Mammary epithelial cell (primary cell): ENCODE measurements at regions of chr2 and their contacts with region 1.

Region 1: DNA sequence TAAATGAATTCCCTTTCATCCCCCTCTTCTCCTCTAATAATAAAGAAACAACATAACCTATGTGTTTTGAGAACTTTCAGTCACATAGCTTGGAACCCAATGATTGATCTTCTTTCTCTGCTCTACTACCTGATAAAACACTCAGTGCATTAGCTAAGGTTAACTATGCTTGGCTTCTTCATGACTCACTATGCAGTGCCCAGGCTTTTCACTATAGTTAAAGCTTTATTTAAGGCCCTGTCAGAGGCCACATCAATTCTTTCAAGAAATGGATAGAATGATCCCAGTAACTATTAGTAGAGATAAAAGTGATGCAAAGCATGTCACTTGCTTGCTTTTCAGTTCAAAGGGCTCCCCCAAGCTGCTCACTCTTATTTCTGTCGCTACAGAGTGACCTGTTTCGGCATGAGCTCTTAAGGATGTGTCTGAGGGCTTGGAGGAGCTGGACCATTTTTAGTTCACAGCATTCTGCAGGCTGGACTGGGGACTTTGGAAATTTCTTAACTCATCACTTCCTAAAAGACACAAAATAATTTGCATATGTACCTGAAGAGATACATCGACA is 384.0 kb downstream of the LRRTM1 start:
- DNase-seq: no peak
- H3K4me3 ChIP-seq: no peak overlapping the region
- H3K27ac ChIP-seq: no peak overlapping the region
- H3K4me1 ChIP-seq: no peaks in the 10 kb centered on the region
- H3K27me3 ChIP-seq: no peaks in the 10 kb centered on the region
- CTCF ChIP-seq: no peak

Region 2: DNA sequence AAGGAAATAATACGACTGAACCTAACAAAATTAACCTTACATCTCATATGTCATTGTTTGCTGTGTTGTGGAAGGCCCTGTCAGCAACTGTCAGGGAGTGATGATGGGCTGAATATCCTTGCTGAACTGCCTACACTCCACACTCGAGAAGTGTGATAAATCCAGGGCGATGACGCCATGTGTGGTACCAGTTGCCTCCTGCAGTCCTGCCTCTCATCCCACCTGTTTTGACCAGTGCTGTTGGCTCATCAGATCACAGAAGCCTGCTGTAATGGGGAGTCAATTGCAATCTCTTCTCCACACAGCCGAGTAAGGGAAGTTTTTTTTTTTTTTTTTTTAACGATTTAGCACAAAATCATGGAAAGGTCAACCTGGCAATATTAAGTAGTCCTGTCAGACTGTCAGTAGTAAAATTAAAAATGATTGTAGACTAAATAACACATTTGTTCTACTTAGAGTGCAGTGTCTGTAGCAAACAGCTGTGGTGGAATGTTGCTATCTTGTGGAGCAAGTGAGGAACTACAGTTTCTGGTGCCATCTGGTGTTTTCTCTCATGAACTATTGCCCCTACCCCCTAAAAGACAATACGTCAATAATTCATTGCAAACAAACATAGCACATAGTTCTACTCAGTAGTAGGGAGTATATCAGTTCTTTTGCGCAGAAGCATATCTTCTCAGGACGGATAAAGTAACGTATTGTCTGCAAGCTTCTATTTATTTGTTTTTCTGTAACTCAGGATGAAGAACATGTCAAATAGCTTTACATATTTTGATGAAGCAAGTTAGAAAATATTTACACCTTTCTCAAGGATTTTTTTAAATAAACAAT is 60.2 kb before region 1 on chr2:
- CTCF ChIA-PET with region 1: no interaction called
- dilution Hi-C with region 1: loop called (anchors 5 kb)
- in situ Hi-C with region 1: no loop called
- intact Hi-C with region 1: no loop called
- DNase-seq: no peak
- H3K4me3 ChIP-seq: no peak overlapping the region
- H3K27ac ChIP-seq: no peak overlapping the region
- H3K4me1 ChIP-seq: no peaks in the 10 kb centered on the region
- H3K27me3 ChIP-seq: no peaks in the 10 kb centered on the region
- CTCF ChIP-seq: peak in 1 of 2 donors; percentile 1

Region 3: GRCh38 chr2:79960519-79960918 is 39.9 kb after region 1 on chr2:
- CTCF ChIA-PET with region 1: no interaction called
- dilution Hi-C with region 1: no loop called
- in situ Hi-C with region 1: no loop called
- intact Hi-C with region 1: no loop called
- DNase-seq: no peak
- H3K4me3 ChIP-seq: no peak overlapping the region
- H3K27ac ChIP-seq: no peak overlapping the region
- H3K4me1 ChIP-seq: no peaks in the 10 kb centered on the region
- H3K27me3 ChIP-seq: no peaks in the 10 kb centered on the region
- CTCF ChIP-seq: no peak